ENCODE measurements at regions of chr10 and their contacts with region 1.

Region 1: GRCh38 chr10:97463363-97464132 is 17.6 kb downstream of the ZDHHC16 start:
- DNase-seq: peak; percentile 54
- ATAC-seq: peak; percentile 71
- H3K4me3 ChIP-seq: no peak overlapping the region
- H3K4me3 Mint-ChIP-seq: no peak overlapping the region
- H3K27ac ChIP-seq: no peak overlapping the region
- H3K27ac Mint-ChIP-seq: peak overlapping the region; percentile 17
- H3K4me1 ChIP-seq: no peaks in the 10 kb centered on the region
- H3K4me1 Mint-ChIP-seq: no peaks in the 10 kb centered on the region
- H3K27me3 ChIP-seq: no peaks in the 10 kb centered on the region
- H3K27me3 Mint-ChIP-seq: no peaks in the 10 kb centered on the region
- CTCF ChIP-seq: peak; percentile 86

Region 2: DNA sequence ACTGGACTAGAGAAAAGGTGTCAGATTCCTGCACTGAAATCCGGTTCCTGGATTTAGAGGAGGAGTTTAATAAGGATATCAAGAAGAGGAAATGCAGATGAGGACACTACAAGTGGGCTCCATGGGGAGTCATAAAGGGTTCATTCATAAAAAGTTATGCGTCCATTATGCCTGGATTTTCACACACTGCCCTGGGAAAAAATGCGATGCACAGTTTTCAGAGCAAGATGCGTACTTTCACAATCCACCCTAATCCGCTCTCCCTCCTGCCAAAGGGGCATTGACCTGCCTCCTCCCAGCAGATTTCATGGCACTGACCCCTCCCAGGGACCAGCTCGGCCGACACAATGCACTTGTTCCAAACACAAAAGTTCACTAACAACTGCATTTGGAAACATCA is 1062.5 kb before region 1 on chr10:
- CTCF ChIA-PET with region 1: no interaction called
- POLR2A ChIA-PET with region 1: no interaction called
- intact Hi-C with region 1: no loop called
- DNase-seq: no peak
- ATAC-seq: no peak
- H3K4me3 ChIP-seq: no peak overlapping the region
- H3K4me3 Mint-ChIP-seq: no peak overlapping the region
- H3K27ac ChIP-seq: no peak overlapping the region
- H3K27ac Mint-ChIP-seq: no peak overlapping the region
- H3K4me1 ChIP-seq: peaks cover 0 to 3% of the 10 kb centered on the region in 2 donors
- H3K4me1 Mint-ChIP-seq: peaks cover 1% of the 10 kb centered on the region
- H3K27me3 ChIP-seq: peaks cover 0 to 13% (median 4%) of the 10 kb centered on the region in 4 experiments
- H3K27me3 Mint-ChIP-seq: peaks cover 41% of the 10 kb centered on the region
- CTCF ChIP-seq: no peak

Region 3: DNA sequence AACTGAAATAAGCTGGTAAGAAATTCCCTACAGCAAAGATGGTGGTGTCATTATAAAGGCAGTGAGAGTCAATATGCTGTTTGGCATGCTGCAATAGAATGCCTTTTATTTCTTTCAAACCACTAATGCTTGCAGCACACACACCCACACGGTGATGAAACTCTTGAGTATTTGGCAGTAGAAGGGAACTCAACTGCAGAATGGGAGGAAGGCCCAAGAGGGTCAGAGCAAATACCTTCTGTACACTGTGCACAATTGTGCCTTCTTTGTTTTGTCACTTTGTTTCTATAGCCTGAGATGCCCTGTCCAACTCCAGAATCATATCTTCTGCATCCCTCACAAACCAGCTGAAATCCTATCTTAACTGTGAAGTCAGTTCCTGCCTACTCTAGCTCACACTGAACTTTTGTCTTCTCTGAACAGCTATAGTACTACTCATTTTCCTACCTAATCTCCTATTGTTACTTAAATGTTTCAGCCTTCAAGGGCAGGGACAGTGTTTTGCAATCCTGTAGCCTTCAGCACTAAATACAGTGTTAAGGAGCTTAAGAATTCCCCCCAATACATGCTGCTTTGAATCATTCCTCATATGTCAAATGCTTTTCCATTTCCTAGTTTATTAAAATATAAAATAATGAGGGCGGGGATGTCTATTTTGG is 12.5 kb after region 1 on chr10:
- CTCF ChIA-PET with region 1: interaction called, 17 read pairs
- POLR2A ChIA-PET with region 1: no interaction called
- intact Hi-C with region 1: no loop called
- DNase-seq: no peak
- ATAC-seq: no peak
- H3K4me3 ChIP-seq: no peak overlapping the region
- H3K4me3 Mint-ChIP-seq: no peak overlapping the region
- H3K27ac ChIP-seq: no peak overlapping the region
- H3K27ac Mint-ChIP-seq: no peak overlapping the region
- H3K4me1 ChIP-seq: no peaks in the 10 kb centered on the region
- H3K4me1 Mint-ChIP-seq: no peaks in the 10 kb centered on the region
- H3K27me3 ChIP-seq: no peaks in the 10 kb centered on the region
- H3K27me3 Mint-ChIP-seq: no peaks in the 10 kb centered on the region
- CTCF ChIP-seq: no peak

Region 4: DNA sequence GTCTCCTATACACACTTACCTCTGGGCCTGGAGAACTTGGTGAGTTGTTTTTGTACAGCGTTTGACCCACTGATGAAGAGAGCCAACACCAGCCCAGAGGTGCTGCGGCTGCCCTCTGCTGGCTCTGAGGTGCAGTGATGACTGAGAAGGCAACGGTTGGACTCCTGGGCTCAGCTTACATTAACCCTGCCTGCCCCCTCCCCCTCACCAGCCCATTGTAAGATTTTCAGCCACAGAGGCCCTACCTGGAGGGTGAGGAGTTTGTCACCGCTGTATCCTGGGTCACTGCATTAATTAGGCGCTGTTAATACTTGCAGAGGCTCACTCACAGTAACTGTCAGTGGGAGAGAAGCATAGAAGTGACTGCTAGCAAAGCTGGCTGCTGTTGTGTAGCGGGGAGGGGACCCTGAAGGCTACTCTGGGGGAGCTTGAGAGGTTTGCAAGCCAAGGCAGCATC is 90.1 kb after region 1 on chr10:
- CTCF ChIA-PET with region 1: interaction called, 96 read pairs
- POLR2A ChIA-PET with region 1: no interaction called
- intact Hi-C with region 1: no loop called
- DNase-seq: peak; percentile 59
- ATAC-seq: peak; percentile 81
- H3K4me3 ChIP-seq: no peak overlapping the region
- H3K4me3 Mint-ChIP-seq: no peak overlapping the region
- H3K27ac ChIP-seq: no peak overlapping the region
- H3K27ac Mint-ChIP-seq: no peak overlapping the region
- H3K4me1 ChIP-seq: no peaks in the 10 kb centered on the region
- H3K4me1 Mint-ChIP-seq: no peaks in the 10 kb centered on the region
- H3K27me3 ChIP-seq: no peaks in the 10 kb centered on the region
- H3K27me3 Mint-ChIP-seq: no peaks in the 10 kb centered on the region
- CTCF ChIP-seq: peak; percentile 73

Region 5: GRCh38 chr10:97748116-97748515 is 284.6 kb after region 1 on chr10:
- CTCF ChIA-PET with region 1: no interaction called
- POLR2A ChIA-PET with region 1: no interaction called
- intact Hi-C with region 1: no loop called
- DNase-seq: no peak
- ATAC-seq: no peak
- H3K4me3 ChIP-seq: no peak overlapping the region
- H3K4me3 Mint-ChIP-seq: no peak overlapping the region
- H3K27ac ChIP-seq: no peak overlapping the region
- H3K27ac Mint-ChIP-seq: no peak overlapping the region
- H3K4me1 ChIP-seq: no peaks in the 10 kb centered on the region
- H3K4me1 Mint-ChIP-seq: peaks cover 6% of the 10 kb centered on the region
- H3K27me3 ChIP-seq: no peaks in the 10 kb centered on the region
- H3K27me3 Mint-ChIP-seq: no peaks in the 10 kb centered on the region
- CTCF ChIP-seq: no peak

Measured in B cell (primary cell).